CD4-positive, alpha-beta memory T cell (primary cell): ENCODE measurements at regions of chr14 and their contacts with region 1.

Region 1: DNA sequence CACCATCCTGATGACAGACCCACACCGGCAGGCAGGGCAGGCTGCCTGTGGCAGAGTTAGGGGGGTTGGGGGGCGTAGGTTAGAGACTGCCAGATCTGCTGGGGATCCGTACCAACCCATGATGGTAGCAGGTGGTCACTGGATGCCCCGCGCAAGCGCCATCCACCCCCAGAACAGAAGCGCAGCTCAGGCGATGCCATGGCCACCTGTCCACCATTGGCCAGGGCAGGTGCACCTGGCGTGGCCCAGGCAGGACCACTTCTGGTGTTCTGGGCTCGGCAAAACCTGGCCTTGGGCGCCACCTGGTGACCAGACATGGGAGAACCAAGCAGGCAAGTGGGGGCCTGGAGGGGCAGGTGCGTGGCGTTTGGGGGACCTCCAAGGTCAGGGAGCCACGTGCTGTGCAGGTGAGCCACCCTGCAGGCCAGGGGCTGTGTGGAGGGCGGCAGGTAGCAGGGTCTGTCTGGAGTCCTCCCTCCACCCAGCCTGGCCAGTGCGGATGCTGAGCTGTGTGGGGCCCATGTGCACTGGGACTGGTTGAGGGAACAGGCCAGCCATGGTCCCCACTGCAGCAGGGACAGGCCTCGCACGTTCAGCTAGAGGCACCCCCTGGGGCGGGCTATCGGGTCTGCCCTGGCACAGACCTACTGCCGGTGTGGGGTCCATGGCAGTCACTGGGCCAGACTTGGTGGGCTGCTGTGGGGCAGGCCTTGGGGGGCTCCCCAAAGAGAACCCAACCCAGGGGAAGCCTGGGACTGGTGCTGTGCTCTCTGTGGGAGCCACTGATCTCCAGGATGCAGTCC is 15.6 kb downstream of the BAG5 start:
- DNase-seq: peak; percentile 63 to 75 (median 71)
- H3K4me3 ChIP-seq: no peak overlapping the region
- H3K4me3 Mint-ChIP-seq: peak overlapping the region in 1 of 8 donors; percentile 23
- H3K27ac ChIP-seq: no peak overlapping the region
- H3K27ac Mint-ChIP-seq: no peak overlapping the region
- H3K4me1 ChIP-seq: no peaks in the 10 kb centered on the region
- H3K4me1 Mint-ChIP-seq: peaks cover 0 to 4% (median 2%) of the 10 kb centered on the region in 4 donors
- H3K27me3 ChIP-seq: no peaks in the 10 kb centered on the region
- H3K27me3 Mint-ChIP-seq: peaks cover 0 to 2% of the 10 kb centered on the region in 2 donors

Region 2: DNA sequence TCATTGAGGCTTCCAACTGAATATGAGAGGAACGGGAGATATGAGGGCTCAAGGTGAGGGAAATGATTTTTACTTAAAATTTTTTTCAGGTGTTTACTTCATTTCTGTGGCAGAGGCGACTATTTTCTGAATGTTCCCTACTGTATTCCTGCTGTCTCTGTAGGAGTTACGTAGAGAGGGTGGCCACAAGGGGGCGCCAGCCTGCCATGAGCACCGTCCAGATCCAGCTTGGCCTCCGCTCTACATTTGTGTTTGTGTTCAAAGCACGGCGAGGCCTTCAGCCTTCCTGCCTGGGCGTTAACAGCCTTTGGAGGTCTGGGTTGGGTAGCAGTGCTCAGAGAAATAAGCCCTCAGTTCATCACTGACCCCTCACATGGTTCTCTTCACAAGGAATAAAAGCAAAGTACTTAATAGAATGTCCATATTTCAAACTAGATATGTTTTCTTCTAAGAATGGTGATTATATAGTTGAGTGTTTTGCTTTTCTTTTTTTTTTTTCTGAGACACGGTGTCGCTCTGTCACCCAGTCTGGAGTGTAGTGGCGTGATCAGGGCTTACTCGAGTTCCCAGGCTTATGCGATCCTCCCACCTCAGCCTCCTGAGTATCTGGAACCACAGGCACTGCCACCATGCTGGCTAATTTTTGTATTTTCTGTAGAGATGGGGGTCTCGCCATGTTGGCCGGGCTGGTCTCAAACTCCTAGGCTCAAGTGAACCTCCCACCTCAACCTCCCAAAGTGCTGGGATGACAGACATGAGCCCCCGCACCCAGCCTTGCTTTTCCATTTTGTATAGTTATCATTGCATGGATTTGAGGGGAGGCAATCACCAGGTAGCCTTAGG is 46.5 kb before region 1 on chr14:
- CTCF ChIA-PET with region 1: interaction called, 10 read pairs
- POLR2A ChIA-PET with region 1: interaction called, 3 read pairs
- intact Hi-C with region 1: loop called (anchors 1 kb)
- DNase-seq: peak; percentile 69 to 73 (median 70)
- H3K4me3 ChIP-seq: no peak overlapping the region
- H3K4me3 Mint-ChIP-seq: no peak overlapping the region
- H3K27ac ChIP-seq: no peak overlapping the region
- H3K27ac Mint-ChIP-seq: peak overlapping the region in 6 of 7 donors; percentile 8 to 83 (median 48)
- H3K4me1 ChIP-seq: peaks cover 6% of the 10 kb centered on the region
- H3K4me1 Mint-ChIP-seq: peaks cover 9 to 10% (median 9%) of the 10 kb centered on the region in 4 donors
- H3K27me3 ChIP-seq: no peaks in the 10 kb centered on the region
- H3K27me3 Mint-ChIP-seq: no peaks in the 10 kb centered on the region

Region 3: DNA sequence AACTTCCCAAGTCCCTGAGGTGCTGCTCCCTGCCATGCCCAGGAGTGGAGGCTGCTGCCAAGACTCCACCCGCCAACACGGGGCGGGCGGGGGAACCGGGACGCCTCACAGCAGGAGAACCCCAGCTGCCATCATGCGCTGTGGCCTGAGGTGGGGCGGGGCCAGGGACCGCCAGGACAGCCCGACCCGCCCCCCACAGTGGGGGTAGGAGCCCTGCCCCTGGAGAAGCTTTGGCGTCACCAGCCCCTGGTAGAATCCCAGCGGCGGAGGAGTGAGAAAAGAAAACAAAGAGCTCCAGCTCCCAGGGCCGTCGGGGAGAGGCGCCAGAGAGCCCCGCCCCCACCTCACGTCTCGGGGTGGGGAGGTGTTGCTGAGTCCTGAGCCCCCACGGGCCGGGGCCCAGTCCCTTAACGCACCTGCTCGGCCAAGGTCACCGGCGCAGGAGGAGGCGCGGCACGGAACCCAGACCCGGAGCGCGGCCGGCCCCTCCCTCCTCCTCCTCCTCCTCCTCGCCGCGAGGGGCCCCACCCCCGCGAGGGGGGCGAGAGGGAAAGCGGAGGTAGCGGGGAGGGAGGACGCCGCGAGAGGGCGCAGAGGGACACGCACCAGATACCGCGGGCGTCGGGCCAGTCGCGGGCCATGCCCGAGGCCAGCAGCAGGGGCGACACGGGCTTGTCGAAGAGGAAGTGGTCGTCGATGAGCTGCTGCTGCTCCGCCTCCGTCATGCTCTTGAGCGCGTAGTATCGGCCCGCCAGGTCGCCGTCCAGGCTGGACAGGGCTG is 26.0 kb before region 1 on chr14:
- CTCF ChIA-PET with region 1: interaction called, 78 read pairs
- POLR2A ChIA-PET with region 1: interaction called, 3 read pairs
- intact Hi-C with region 1: loop called (anchors 1 kb)
- DNase-seq: peak; percentile 59 to 76 (median 63)
- H3K4me3 ChIP-seq: peak overlapping the region in 1 of 2 donors; percentile 52
- H3K4me3 Mint-ChIP-seq: peak overlapping the region; percentile 39 to 77 (median 66)
- H3K27ac ChIP-seq: no peak overlapping the region
- H3K27ac Mint-ChIP-seq: no peak overlapping the region
- H3K4me1 ChIP-seq: peaks cover 22% of the 10 kb centered on the region
- H3K4me1 Mint-ChIP-seq: peaks cover 0 to 21% (median 8%) of the 10 kb centered on the region in 4 donors
- H3K27me3 ChIP-seq: no peaks in the 10 kb centered on the region
- H3K27me3 Mint-ChIP-seq: peaks cover 3% of the 10 kb centered on the region in 2 donors

Region 4: GRCh38 chr14:103847451-103848188 is 300.8 kb after region 1 on chr14 and contains the start of gene PPP1R13B:
- CTCF ChIA-PET with region 1: no interaction called
- POLR2A ChIA-PET with region 1: no interaction called
- intact Hi-C with region 1: no loop called
- DNase-seq: peak; percentile 90 to 93 (median 92)
- H3K4me3 ChIP-seq: peak within 1 kb of the TSS; percentile 1 to 55
- H3K4me3 Mint-ChIP-seq: peak within 1 kb of the TSS; percentile 86 to 96 (median 92)
- H3K27ac ChIP-seq: peak within 1 kb of the TSS; percentile 26
- H3K27ac Mint-ChIP-seq: peak within 1 kb of the TSS; percentile 43 to 93 (median 85)
- H3K4me1 ChIP-seq: peaks cover 12% of the 10 kb centered on the region
- H3K4me1 Mint-ChIP-seq: peaks cover 9 to 26% (median 16%) of the 10 kb centered on the region in 4 donors
- H3K27me3 ChIP-seq: no peaks in the 10 kb centered on the region
- H3K27me3 Mint-ChIP-seq: no peaks in the 10 kb centered on the region
- total RNA-seq, gene PPP1R13B: 23.3 to 30.5 TPM

Region 5: DNA sequence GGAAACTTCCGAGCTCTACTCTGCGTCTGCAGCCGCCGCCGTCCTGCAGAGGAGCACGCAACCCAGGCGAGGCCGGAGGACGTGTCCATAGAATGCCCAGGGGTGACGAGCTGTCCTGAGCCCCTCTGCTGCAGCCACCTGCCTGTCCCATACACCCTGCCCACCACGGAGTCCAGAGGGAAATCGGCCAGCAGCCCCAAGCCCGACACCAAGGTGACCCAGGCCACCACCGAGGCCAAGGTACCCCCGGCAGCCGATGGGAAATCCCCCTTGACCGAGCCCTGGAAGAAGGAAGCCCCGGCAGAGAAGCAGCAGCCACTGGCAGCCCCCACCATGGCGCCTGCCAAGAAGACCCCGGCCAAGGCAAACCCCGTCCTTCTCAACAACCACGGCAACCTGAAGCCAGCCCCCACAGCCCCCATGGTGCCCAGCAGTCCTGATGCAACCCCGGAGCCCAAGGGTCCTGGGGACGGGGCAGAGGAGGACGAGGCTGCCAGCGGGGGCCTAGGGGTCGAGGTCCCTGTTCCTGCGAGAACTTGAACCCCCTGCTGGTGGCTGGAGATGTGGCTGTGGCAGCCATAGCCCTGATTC is 904.1 kb after region 1 on chr14:
- CTCF ChIA-PET with region 1: no interaction called
- POLR2A ChIA-PET with region 1: no interaction called
- intact Hi-C with region 1: no loop called
- DNase-seq: no peak
- H3K4me3 ChIP-seq: no peak overlapping the region
- H3K4me3 Mint-ChIP-seq: no peak overlapping the region
- H3K27ac ChIP-seq: no peak overlapping the region
- H3K27ac Mint-ChIP-seq: peak overlapping the region in 1 of 7 donors; percentile 35
- H3K4me1 ChIP-seq: no peaks in the 10 kb centered on the region
- H3K4me1 Mint-ChIP-seq: no peaks in the 10 kb centered on the region
- H3K27me3 ChIP-seq: peaks cover 5% of the 10 kb centered on the region
- H3K27me3 Mint-ChIP-seq: peaks cover 38% of the 10 kb centered on the region in 2 donors